Activated CD4-positive, alpha-beta T cell treated with anti-CD3 and anti-CD28 coated beads, Interleukin-2, amount 10 ng/mL, durations not matched to agents 7 days and 5 days (primary cell): ENCODE measurements at regions of chr7 and their contacts with region 1.

Region 1: GRCh38 chr7:151017953-151018420 is 6.3 kb downstream of the ATG9B start:
- DNase-seq: peak; percentile 77
- H3K4me3 Mint-ChIP-seq: peak overlapping the region; percentile 64
- H3K27ac Mint-ChIP-seq: peak overlapping the region; percentile 76
- H3K4me1 Mint-ChIP-seq: peaks cover 60% of the 10 kb centered on the region
- H3K27me3 Mint-ChIP-seq: peaks cover 33% of the 10 kb centered on the region

Region 2: GRCh38 chr7:150962553-150963399 is 55.2 kb before region 1 on chr7:
- CTCF ChIA-PET with region 1: interaction called, 11 read pairs
- POLR2A ChIA-PET with region 1: no interaction called
- DNase-seq: peak; percentile 65
- H3K4me3 Mint-ChIP-seq: no peak overlapping the region
- H3K27ac Mint-ChIP-seq: no peak overlapping the region
- H3K4me1 Mint-ChIP-seq: peaks cover 14% of the 10 kb centered on the region
- H3K27me3 Mint-ChIP-seq: peaks cover 27% of the 10 kb centered on the region

Region 3: DNA sequence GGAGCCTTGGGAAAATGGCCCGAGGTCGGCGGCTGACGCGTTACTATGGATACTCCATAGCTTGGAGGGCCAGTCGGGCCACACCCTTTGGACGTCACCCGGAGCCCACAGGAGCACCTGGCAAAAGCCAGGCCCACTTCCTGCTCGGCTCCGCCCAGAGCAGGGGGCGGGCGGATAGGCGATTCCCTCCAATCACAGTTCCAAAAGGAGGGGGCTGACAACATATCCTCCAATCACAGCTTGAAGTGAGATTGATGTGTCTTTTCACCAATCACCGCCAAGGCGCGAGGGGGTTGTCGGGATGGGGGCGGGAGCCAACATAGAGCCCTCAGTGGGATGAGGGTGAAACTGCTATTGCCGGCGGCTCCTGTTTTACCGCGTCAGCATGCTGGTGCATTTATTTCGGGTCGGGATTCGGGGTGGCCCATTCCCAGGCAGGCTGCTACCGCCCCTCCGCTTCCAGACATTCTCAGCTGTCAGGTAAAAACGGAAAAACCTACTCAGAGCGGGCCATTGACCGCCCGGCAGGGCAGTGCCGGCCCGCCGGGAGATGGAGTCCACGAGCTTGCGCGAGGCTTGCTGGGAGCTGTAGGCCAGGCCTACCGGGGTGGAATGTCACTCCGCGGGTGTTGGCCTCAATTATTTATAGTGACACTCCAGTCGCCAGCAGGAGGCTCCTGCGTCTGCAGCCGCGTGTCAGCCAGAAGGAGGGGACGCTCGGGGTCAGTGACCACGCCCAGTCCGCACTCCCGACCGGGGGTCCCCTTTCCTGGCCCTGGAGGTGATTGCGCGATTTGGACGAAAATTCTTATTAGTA is 10.4 kb after region 1 on chr7 and contains the start of gene ABCB8:
- CTCF ChIA-PET with region 1: interaction called, 35 read pairs
- POLR2A ChIA-PET with region 1: interaction called, 3 read pairs
- DNase-seq: peak; percentile 100
- H3K4me3 Mint-ChIP-seq: peak within 1 kb of the TSS; percentile 88
- H3K27ac Mint-ChIP-seq: peak within 1 kb of the TSS; percentile 96
- H3K4me1 Mint-ChIP-seq: peaks cover 28% of the 10 kb centered on the region
- H3K27me3 Mint-ChIP-seq: no peaks in the 10 kb centered on the region
- total RNA-seq, gene ABCB8: 57.5 to 67.8 TPM